ENCODE measurements at regions of chrX and their contacts with region 1.

Region 1: DNA sequence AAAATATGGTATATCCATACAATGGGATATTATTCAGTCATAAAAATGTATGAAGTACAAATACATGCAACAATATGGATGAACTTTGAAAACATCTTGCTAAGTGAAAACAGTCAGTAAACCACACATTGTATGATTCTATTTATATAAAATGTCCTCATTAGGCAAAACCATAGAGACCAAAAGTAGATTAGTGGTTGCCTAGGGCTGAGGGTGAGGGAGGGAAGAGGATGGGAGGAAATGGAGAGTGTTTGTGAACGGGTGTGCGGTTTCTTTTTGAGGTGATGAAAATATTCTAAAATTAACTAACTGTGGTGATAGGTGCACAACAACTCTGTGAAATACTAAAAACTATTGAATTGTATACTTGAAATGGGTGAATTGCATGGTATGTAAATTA is 29.6 kb downstream of the TEX11 start:
- DNase-seq: no peak
- H3K4me3 ChIP-seq: no peak overlapping the region
- H3K27ac ChIP-seq: no peak overlapping the region
- H3K4me1 ChIP-seq: no peaks in the 10 kb centered on the region
- H3K27me3 ChIP-seq: no peaks in the 10 kb centered on the region
- CTCF ChIP-seq: no peak

Region 2: GRCh38 chrX:70133303-70134115 is 745.4 kb before region 1 on chrX and contains the start of gene IGBP1:
- CTCF ChIA-PET with region 1: no interaction called
- dilution Hi-C with region 1: no loop called
- in situ Hi-C with region 1: no loop called
- intact Hi-C with region 1: no loop called
- DNase-seq: peak; percentile 79
- H3K4me3 ChIP-seq: peak within 1 kb of the TSS; percentile 59 to 82 (median 68)
- H3K27ac ChIP-seq: peak within 1 kb of the TSS; percentile 89
- H3K4me1 ChIP-seq: peaks cover 18% of the 10 kb centered on the region
- H3K27me3 ChIP-seq: no peaks in the 10 kb centered on the region
- CTCF ChIP-seq: peak; percentile 49 to 62
- total RNA-seq, gene IGBP1: 31.1 to 67.3 TPM

Region 3: DNA sequence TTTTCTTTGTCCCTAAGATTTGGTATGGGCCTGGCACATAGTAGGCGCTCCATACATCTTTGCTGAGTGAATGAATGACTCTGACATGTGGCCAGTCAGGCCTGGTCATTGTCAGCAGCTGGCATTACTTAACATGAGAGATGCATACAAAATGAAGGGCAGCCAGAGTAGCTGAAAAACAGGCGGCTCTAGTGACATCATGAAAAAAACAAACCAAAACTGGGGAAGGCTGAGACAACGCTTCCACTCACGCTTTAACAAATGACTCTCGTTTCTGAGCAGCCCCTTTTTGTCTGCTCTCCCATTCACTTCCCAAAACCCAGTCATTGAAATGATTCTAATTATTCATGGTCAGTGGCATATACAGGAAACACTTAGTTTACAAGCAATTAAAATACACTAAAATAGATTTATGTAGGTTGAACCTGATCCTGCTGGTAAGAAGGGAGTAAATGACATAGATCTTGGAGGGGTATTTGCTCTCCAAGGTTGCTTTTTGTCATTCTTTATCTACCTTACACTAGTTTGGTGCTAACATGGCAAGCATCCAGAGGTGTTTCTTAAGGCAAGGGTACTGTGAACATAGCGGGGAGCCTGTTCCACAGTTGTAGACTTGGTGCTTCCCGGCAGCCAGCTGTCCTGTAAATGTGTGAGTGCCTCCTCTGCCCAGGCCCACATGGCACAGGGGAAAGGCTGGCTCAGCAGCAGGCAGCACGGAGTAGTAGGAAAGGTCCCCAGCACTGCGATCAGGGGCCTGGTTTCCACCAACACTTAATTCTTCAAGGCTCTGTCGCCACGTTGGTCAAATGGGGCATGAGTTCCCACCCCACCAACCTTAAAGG is 1487.9 kb after region 1 on chrX:
- CTCF ChIA-PET with region 1: interaction called, 41 read pairs
- dilution Hi-C with region 1: no loop called
- in situ Hi-C with region 1: no loop called
- intact Hi-C with region 1: no loop called
- DNase-seq: no peak
- H3K4me3 ChIP-seq: no peak overlapping the region
- H3K27ac ChIP-seq: no peak overlapping the region
- H3K4me1 ChIP-seq: no peaks in the 10 kb centered on the region
- H3K27me3 ChIP-seq: no peaks in the 10 kb centered on the region
- CTCF ChIP-seq: no peak